Caco-2 (cell line): ENCODE measurements at regions of chr2 and their contacts with region 1.

Region 1: DNA sequence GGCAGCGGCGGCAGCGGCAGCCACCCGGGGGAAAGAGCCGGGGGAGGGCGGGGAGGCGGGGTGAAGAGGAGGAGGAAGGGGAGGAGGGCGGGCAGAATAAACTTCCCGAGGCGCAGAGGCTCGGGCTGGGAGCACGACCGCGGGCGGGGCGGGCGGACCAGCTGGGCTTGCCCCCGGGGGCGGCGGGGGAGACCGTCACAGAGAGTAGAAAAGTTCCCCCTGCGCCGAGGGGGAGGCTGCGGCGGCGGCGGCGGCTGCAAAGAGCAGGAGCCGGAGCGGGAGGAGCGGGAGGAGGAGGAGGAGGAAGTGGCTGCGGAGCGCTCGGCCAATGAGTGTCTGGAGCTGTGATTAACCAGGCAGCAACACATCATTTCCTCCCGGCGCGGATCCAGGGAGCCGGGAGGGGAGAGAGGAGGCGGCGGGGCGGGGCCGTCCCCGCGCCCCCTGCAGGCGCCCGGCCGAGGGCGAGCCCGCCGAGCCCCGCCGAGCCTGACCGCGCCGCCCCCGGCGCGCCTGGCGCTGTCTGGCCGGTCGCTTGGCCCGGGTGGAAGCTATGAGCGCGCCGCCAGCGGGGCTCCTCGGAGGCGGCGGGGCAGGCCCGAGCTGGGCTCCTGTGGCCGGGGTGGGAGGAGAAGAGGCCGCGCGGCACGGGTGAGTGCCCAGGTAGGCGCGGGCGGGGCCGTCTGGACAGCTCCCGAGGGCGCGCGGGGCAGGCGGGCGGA is at the start of gene ACVR1:
- DNase-seq: peak; percentile 92 to 95
- H3K4me3 ChIP-seq: peak within 1 kb of the TSS; percentile 94
- H3K4me3 Mint-ChIP-seq: peak within 1 kb of the TSS; percentile 91
- H3K27ac Mint-ChIP-seq: peak within 1 kb of the TSS; percentile 66
- H3K4me1 ChIP-seq: 0 out of 2 replicates have a peak, but pooled peaks cover 10% of the 10 kb centered on the region
- H3K4me1 Mint-ChIP-seq: peaks cover 6% of the 10 kb centered on the region
- H3K27me3 ChIP-seq: no peaks in the 10 kb centered on the region
- H3K27me3 Mint-ChIP-seq: no peaks in the 10 kb centered on the region
- CTCF ChIP-seq: no peak
- total RNA-seq, gene ACVR1: 11.1 and 11.3 TPM in 2 replicates

Region 2: DNA sequence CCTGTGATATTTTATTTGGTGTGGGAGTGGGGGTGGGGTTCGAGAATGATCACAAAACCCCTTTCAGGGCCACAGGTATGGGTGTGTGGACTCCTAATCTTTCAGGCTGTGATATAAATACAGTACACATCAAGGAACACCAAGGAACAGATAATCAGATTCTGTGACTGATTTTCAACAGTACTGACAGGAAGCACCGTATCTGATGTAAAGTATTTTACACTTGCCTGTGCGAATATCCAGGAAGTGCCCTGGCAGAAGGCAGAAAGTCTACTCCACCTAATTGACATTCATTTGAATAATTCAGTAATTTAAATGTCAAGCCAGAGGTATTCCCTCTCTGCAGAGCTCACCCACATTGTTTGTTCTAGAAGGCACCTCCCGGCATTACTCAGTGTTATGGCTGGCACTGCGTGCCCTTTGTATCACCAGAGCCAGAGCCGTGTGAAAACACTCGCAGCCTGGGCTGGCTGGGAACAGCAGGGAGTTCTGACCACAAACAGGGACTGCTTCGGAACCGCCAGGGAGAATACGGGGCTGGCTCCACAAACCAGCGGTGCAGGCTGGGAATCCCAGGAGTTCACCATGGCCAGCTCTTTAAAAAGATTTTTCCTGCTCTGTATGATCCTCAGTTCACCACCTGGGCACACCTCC is 91.9 kb before region 1 on chr2:
- CTCF ChIA-PET with region 1: interaction called, 3 read pairs
- POLR2A ChIA-PET with region 1: no interaction called
- intact Hi-C with region 1: loop called (anchors 2 kb)
- DNase-seq: no peak
- H3K4me3 ChIP-seq: no peak overlapping the region
- H3K4me3 Mint-ChIP-seq: no peak overlapping the region
- H3K27ac Mint-ChIP-seq: no peak overlapping the region
- H3K4me1 ChIP-seq: peaks cover 6% of the 10 kb centered on the region; the same call in 1 of the 2 replicates
- H3K4me1 Mint-ChIP-seq: peaks cover 6% of the 10 kb centered on the region
- H3K27me3 ChIP-seq: no peaks in the 10 kb centered on the region
- H3K27me3 Mint-ChIP-seq: no peaks in the 10 kb centered on the region
- CTCF ChIP-seq: no peak

Region 3: DNA sequence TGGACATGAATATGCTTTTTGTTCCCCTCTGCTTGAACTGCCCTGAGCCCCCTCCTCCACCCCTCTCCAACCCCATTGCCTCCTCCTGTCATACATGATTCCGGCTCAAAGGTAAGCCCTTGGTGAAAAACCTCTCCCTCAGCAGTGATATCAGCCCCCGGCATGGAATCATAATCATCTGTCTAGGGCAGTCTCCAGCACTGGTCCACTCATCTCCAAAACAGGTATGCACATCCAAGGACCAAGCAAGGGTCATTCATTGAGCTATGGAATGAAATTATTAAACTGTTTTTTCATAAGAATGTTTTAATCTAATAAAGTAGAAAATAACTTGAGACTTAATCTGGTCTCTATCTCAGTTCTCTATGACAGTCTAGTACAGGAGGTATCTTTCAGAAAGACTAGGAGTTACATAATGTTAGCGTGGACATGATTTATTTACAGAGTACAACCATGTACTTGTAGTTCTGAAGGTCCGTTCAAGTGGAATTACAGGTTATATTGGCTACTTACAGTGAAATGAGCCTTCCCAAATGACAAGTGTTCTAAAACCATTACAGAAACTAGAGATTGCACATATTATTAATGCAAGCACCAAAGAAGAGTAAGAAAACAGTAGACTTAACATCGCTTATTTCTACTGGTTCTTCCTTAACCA is 75.3 kb before region 1 on chr2:
- CTCF ChIA-PET with region 1: no interaction called
- POLR2A ChIA-PET with region 1: no interaction called
- intact Hi-C with region 1: no loop called
- DNase-seq: no peak
- H3K4me3 ChIP-seq: no peak overlapping the region
- H3K4me3 Mint-ChIP-seq: no peak overlapping the region
- H3K27ac Mint-ChIP-seq: no peak overlapping the region
- H3K4me1 ChIP-seq: no peaks in the 10 kb centered on the region
- H3K4me1 Mint-ChIP-seq: no peaks in the 10 kb centered on the region
- H3K27me3 ChIP-seq: no peaks in the 10 kb centered on the region
- H3K27me3 Mint-ChIP-seq: no peaks in the 10 kb centered on the region
- CTCF ChIP-seq: no peak

Region 4: DNA sequence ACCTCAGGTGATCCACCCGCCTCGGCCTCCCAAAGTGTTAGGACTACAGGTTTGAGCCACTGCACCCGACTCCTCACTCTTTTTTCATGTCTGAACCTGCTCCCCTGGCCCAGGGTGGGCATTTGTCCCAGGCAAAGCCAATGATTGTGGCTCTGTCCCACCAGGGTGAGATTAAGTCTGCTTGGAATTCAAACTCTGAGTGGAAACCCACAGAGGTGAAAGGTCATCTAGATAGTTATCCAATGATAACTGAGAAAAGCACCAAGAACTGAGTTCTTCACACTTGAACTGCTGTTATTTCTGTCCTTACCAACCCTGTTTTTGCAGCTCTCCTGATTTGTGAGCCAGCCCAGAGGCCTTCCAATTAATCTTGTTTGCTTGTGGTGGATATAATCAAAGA is 62.3 kb after region 1 on chr2:
- CTCF ChIA-PET with region 1: interaction called, 3 read pairs
- POLR2A ChIA-PET with region 1: no interaction called
- intact Hi-C with region 1: loop called (anchors 5 kb)
- DNase-seq: peak in 1 of 2 experiments; percentile 30
- H3K4me3 ChIP-seq: no peak overlapping the region
- H3K4me3 Mint-ChIP-seq: peak overlapping the region; percentile 55
- H3K27ac Mint-ChIP-seq: peak overlapping the region; percentile 93
- H3K4me1 ChIP-seq: peaks cover 36% of the 10 kb centered on the region
- H3K4me1 Mint-ChIP-seq: peaks cover 48% of the 10 kb centered on the region
- H3K27me3 ChIP-seq: no peaks in the 10 kb centered on the region
- H3K27me3 Mint-ChIP-seq: no peaks in the 10 kb centered on the region
- CTCF ChIP-seq: no peak

Region 5: GRCh38 chr2:158079672-158080071 is 203.4 kb after region 1 on chr2:
- CTCF ChIA-PET with region 1: no interaction called
- POLR2A ChIA-PET with region 1: interaction called, 11 read pairs
- intact Hi-C with region 1: no loop called
- DNase-seq: no peak
- H3K4me3 ChIP-seq: no peak overlapping the region
- H3K4me3 Mint-ChIP-seq: no peak overlapping the region
- H3K27ac Mint-ChIP-seq: no peak overlapping the region
- H3K4me1 ChIP-seq: no peaks in the 10 kb centered on the region
- H3K4me1 Mint-ChIP-seq: peaks cover 5% of the 10 kb centered on the region
- H3K27me3 ChIP-seq: no peaks in the 10 kb centered on the region
- H3K27me3 Mint-ChIP-seq: peaks cover 5% of the 10 kb centered on the region
- CTCF ChIP-seq: no peak

Region 6: GRCh38 chr2:158102446-158102845 is 226.2 kb after region 1 on chr2:
- CTCF ChIA-PET with region 1: no interaction called
- POLR2A ChIA-PET with region 1: no interaction called
- intact Hi-C with region 1: no loop called
- DNase-seq: no peak
- H3K4me3 ChIP-seq: no peak overlapping the region
- H3K4me3 Mint-ChIP-seq: no peak overlapping the region
- H3K27ac Mint-ChIP-seq: no peak overlapping the region
- H3K4me1 ChIP-seq: no peaks in the 10 kb centered on the region
- H3K4me1 Mint-ChIP-seq: no peaks in the 10 kb centered on the region
- H3K27me3 ChIP-seq: no peaks in the 10 kb centered on the region; the same call in 1 of the 2 replicates
- H3K27me3 Mint-ChIP-seq: no peaks in the 10 kb centered on the region
- CTCF ChIP-seq: no peak